ENCODE measurements at regions of chr11 and their contacts with region 1.

Region 1: DNA sequence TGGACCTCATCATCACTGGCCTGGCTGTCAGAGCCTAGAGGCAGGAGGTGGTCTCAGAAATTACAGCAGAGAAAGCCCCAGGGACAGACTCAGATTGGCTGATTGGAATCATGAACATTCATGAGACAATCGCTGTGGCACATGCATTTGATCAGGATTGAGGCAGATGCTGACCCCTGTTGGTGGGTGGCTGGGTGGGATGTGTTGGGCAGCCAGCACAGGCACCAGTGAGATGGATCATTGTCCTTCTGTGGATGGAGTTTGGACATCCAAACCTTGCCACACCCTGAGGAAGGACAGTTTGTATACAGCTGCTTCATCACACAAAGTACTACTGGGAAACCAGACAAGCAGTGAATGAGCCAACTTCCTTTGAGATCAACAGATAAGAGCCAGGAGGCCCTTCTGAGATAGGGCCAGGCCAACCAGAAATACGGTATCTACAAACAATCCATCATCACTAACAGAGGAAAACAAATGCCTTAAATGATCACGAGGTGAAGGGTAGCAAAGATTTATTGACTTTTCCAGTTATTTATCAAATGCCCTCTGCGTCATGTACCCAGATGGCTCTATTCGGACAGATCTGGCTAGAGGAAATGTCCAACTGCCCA is 17.3 kb downstream of the COMMD9 start:
- DNase-seq: peak in 1 of 3 donors; percentile 10
- H3K4me3 ChIP-seq: no peak overlapping the region
- H3K27ac ChIP-seq: no peak overlapping the region
- H3K4me1 ChIP-seq: no peaks in the 10 kb centered on the region
- H3K27me3 ChIP-seq: no peaks in the 10 kb centered on the region

Region 2: DNA sequence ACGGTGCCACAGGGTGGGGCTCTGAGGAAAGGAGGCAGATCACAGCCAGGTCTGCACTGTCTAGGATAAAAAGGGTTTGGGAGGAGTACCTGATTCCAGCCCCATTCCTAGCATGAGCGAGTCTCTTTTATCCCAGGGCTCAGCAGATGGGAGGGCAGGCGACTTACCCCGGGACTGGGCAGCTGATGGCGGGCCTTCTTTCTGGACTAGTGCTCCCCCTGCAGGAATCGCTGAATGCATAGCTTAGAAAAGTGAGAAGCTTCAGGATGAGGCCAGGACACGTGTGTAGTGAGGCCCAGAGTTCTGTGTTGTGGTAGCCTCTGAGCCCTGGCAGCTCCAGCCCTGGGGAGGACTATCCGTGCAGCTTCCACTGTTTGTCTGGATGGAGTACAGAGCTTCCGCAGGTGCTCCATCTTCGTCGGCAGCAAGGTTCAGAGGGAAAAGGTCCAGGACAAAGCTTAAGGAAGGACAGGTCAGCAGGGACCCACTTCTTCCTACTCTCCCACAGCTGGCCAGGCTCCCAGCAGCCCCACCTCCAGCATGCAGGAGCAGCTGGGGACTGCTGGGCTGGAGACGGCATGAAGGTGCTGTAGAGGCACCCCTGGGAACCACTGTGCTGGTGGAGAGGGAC is 13.1 kb before region 1 on chr11:
- CTCF ChIA-PET with region 1: interaction called, 58 read pairs
- POLR2A ChIA-PET with region 1: no interaction called
- DNase-seq: peak; percentile 48 to 70 (median 68)
- H3K4me3 ChIP-seq: no peak overlapping the region
- H3K27ac ChIP-seq: no peak overlapping the region
- H3K4me1 ChIP-seq: peaks cover 0 to 3% (median 0%) of the 10 kb centered on the region in 4 experiments
- H3K27me3 ChIP-seq: peaks cover 0 to 54% (median 7%) of the 10 kb centered on the region in 5 experiments

Region 3: GRCh38 chr11:36306888-36307287 is 35.0 kb after region 1 on chr11:
- CTCF ChIA-PET with region 1: no interaction called
- POLR2A ChIA-PET with region 1: no interaction called
- DNase-seq: peak; percentile 68 to 80 (median 74)
- H3K4me3 ChIP-seq: no peak overlapping the region
- H3K27ac ChIP-seq: no peak overlapping the region
- H3K4me1 ChIP-seq: peaks cover 0 to 5% (median 0%) of the 10 kb centered on the region in 4 experiments
- H3K27me3 ChIP-seq: no peaks in the 10 kb centered on the region

Region 4: GRCh38 chr11:36354221-36355003 is 82.5 kb after region 1 on chr11:
- CTCF ChIA-PET with region 1: no interaction called
- POLR2A ChIA-PET with region 1: no interaction called
- DNase-seq: no peak
- H3K4me3 ChIP-seq: no peak overlapping the region
- H3K27ac ChIP-seq: no peak overlapping the region
- H3K4me1 ChIP-seq: peaks cover 16 to 44% (median 18%) of the 10 kb centered on the region in 4 experiments
- H3K27me3 ChIP-seq: no peaks in the 10 kb centered on the region

Measured in common myeloid progenitor, CD34-positive (primary cell).